PC-9 (cell line): ENCODE measurements at regions of chr5 and their contacts with region 1.

Region 1: DNA sequence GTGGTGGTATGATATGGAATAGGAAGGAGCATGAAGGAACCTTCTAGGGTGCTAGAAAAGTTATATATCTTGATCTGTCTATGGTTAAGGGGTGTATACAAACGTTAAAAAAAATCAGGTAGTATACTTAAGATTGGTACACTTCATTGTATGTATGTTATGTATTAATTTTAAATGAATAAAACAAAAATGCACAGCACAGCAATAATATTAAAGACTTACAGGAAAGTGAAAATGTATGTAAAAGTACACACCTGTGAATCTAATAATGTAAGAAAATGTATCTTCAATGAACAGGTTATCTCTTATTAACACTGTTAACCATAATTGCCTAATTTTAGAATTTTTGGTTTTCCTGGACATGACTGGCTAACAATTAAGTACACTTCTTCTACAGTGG is 77.2 kb downstream of the HMGCR start:
- DNase-seq: no peak
- H3K4me3 ChIP-seq: no peak overlapping the region
- H3K27ac ChIP-seq: no peak overlapping the region
- H3K4me1 ChIP-seq: no peaks in the 10 kb centered on the region
- H3K27me3 ChIP-seq: no peaks in the 10 kb centered on the region
- CTCF ChIP-seq: no peak

Region 2: DNA sequence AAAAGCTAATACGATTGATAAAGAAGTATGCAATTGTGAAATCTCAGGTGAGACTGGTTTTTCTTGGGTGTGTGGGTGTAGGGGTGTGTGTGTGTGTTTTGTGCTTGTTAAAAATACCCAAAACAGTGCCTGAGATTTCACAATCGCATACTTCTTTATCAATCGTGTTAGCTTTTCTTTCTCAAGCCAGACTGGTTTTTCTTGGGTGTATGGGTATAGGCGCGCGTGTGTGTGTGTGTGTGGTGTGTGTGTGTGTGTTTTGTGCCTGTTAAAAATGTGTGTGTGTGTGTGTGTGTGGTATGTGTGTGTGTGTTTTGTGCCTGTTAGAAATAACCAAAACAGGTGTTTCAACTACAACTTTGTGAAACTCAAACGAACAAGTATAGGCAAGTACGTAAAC is 43.4 kb after region 1 on chr5:
- CTCF ChIA-PET with region 1: no interaction called
- POLR2A ChIA-PET with region 1: no interaction called
- intact Hi-C with region 1: loop called (anchors 2 kb)
- DNase-seq: peak in 1 of 2 experiments; percentile 68
- H3K4me3 ChIP-seq: no peak overlapping the region
- H3K27ac ChIP-seq: no peak overlapping the region
- H3K4me1 ChIP-seq: peaks cover 7% of the 10 kb centered on the region; the same call in 1 of the 2 replicates
- H3K27me3 ChIP-seq: no peaks in the 10 kb centered on the region
- CTCF ChIP-seq: no peak